Endothelial cell of umbilical vein (primary cell): ENCODE measurements at regions of chr10 and their contacts with region 1.

Region 1: DNA sequence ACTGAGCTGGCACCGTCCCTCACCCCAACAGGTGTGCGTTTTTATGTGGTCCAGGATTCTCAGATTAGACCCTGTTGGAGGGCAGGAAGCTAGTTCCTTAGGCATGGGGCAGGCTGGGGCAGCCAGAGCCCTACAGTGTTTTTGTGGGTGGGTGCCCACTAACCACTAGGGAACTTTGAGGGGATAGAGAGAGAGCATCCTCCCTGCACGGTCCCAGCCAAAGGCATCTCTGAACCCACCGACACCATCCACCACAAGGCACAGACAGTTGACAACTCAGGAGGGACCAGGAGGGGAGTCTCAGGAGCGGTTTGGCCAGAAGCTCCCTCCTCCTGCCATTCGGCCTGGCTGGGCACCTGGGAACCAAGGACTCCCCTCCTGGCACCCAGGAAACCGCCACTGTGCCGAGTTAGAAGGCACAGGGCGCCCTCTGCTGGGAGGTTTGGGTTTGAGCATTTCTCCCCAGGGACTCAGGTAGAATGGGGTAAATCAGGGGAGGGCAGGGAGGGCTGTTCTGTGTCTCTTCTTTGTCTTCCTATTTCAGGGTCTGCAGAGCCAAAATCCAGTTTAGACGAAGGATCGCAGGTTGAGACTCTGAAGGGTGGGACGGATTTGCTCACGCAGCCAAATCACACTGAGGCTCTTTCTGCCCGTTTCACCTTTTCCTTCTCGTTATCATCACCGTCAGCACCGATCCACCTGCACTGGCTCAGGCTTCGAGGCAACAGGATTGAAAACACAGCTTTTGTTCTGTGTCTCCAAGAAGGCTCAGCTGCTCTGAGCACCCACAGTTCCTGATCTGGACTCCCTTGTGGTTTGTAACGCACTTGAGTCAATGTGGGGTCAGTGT is 84.8 kb upstream of the COL13A1 start:
- DNase-seq: no peak
- H3K4me3 ChIP-seq: no peak overlapping the region
- H3K27ac ChIP-seq: no peak overlapping the region
- H3K4me1 ChIP-seq: peaks cover 6% of the 10 kb centered on the region
- H3K27me3 ChIP-seq: peaks cover 0 to 2% of the 10 kb centered on the region in 2 experiments
- CTCF ChIP-seq: peak; percentile 65 to 80
- POLR2A ChIP-seq: no peak

Region 2: GRCh38 chr10:69541463-69541862 is 175.5 kb before region 1 on chr10:
- CTCF ChIA-PET with region 1: no interaction called
- POLR2A ChIA-PET with region 1: no interaction called
- dilution Hi-C with region 1: no loop called
- intact Hi-C with region 1: no loop called
- DNase-seq: no peak
- H3K4me3 ChIP-seq: no peak overlapping the region
- H3K27ac ChIP-seq: no peak overlapping the region
- H3K4me1 ChIP-seq: no peaks in the 10 kb centered on the region
- H3K27me3 ChIP-seq: peaks cover 0 to 2% of the 10 kb centered on the region in 2 experiments
- CTCF ChIP-seq: no peak
- POLR2A ChIP-seq: no peak

Region 3: GRCh38 chr10:69639291-69640195 is 77.4 kb before region 1 on chr10:
- CTCF ChIA-PET with region 1: interaction called, 39 read pairs
- POLR2A ChIA-PET with region 1: no interaction called
- dilution Hi-C with region 1: no loop called
- intact Hi-C with region 1: loop called (anchors 1 kb)
- DNase-seq: peak; percentile 58
- H3K4me3 ChIP-seq: no peak overlapping the region
- H3K27ac ChIP-seq: no peak overlapping the region
- H3K4me1 ChIP-seq: no peaks in the 10 kb centered on the region
- H3K27me3 ChIP-seq: peaks cover 3 to 9% of the 10 kb centered on the region in 2 experiments
- CTCF ChIP-seq: peak; percentile 78 to 82
- POLR2A ChIP-seq: no peak

Region 4: DNA sequence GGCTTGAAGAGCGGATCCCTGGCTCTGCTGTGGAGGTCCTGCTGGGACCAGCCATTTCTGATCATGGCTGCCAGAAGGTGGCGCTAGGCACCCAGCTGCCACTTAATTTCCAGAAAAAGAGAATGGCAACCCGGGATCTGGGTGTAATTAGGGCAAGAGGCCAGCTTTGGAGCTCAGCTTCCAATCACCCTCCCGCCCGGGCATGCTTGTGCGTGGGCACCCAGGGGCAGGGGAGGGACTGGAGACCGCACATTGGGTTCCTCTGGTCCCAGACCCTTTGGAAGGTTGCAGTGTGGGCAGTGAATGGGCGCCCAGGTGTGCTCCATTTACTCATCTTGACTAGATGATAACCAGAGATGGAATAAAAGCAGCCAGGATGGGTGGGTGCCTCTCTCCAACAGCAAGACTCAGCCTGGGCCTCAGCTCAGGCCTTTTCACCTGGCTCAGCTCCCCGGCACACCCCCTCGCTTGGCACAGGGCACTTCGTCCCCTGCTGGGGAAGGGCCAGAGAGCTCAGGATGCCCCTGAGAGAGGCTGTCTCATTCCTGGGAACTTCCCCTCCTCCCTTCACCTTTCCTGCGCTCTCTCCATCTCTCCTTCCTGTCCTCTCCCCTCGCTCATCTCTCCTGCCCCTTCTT is 72.2 kb before region 1 on chr10:
- CTCF ChIA-PET with region 1: interaction called, 39 read pairs
- POLR2A ChIA-PET with region 1: no interaction called
- dilution Hi-C with region 1: no loop called
- intact Hi-C with region 1: loop called (anchors 1 kb)
- DNase-seq: peak; percentile 49
- H3K4me3 ChIP-seq: no peak overlapping the region
- H3K27ac ChIP-seq: no peak overlapping the region
- H3K4me1 ChIP-seq: no peaks in the 10 kb centered on the region
- H3K27me3 ChIP-seq: peaks cover 2 to 3% of the 10 kb centered on the region in 2 experiments
- CTCF ChIP-seq: peak; percentile 84 to 86
- POLR2A ChIP-seq: no peak

Region 5: GRCh38 chr10:69696073-69696731 is 20.7 kb before region 1 on chr10:
- CTCF ChIA-PET with region 1: interaction called, 13 read pairs
- POLR2A ChIA-PET with region 1: no interaction called
- dilution Hi-C with region 1: no loop called
- intact Hi-C with region 1: loop called (anchors 2 kb)
- DNase-seq: peak; percentile 70
- H3K4me3 ChIP-seq: no peak overlapping the region
- H3K27ac ChIP-seq: no peak overlapping the region
- H3K4me1 ChIP-seq: peaks cover 2% of the 10 kb centered on the region
- H3K27me3 ChIP-seq: peaks cover 9 to 15% of the 10 kb centered on the region in 2 experiments
- CTCF ChIP-seq: peak; percentile 56 to 60
- POLR2A ChIP-seq: no peak

Region 6: DNA sequence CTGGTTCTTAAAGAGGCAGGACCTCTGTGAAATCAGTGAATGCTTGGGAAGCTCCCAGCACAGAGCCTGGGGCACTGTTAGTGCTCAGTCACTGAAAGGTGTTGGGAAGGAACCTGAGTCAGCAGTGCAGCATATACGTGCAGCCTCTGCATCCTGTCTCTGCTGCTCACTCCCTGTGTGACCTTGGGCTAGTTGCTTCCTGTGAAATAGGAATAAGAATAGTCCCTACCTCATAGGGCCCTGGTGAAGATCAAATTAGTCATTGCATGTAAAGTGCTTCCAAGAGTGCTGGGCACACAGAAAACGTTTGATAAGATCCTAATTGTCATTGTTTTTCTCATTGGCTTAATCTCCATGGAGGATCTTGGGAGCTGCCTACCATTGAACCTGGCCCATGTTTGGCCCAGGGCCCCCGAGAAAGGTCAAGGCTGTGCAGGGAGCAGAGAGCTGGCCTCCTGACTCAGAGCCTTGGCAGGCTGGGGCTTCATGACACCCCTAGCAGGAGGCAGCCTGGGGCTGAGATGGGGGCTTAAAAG is 11.5 kb after region 1 on chr10:
- CTCF ChIA-PET with region 1: interaction called, 13 read pairs
- POLR2A ChIA-PET with region 1: no interaction called
- dilution Hi-C with region 1: no loop called
- intact Hi-C with region 1: no loop called
- DNase-seq: peak; percentile 87
- H3K4me3 ChIP-seq: no peak overlapping the region
- H3K27ac ChIP-seq: peak overlapping the region; percentile 64
- H3K4me1 ChIP-seq: peaks cover 21% of the 10 kb centered on the region
- H3K27me3 ChIP-seq: peaks cover 0 to 2% of the 10 kb centered on the region in 2 experiments
- CTCF ChIP-seq: no peak
- POLR2A ChIP-seq: no peak

Region 7: GRCh38 chr10:69974551-69975155 is 257.7 kb after region 1 on chr10:
- CTCF ChIA-PET with region 1: no interaction called
- POLR2A ChIA-PET with region 1: no interaction called
- dilution Hi-C with region 1: no loop called
- intact Hi-C with region 1: no loop called
- DNase-seq: no peak
- H3K4me3 ChIP-seq: no peak overlapping the region
- H3K27ac ChIP-seq: no peak overlapping the region
- H3K4me1 ChIP-seq: no peaks in the 10 kb centered on the region
- H3K27me3 ChIP-seq: peaks cover 40 to 74% of the 10 kb centered on the region in 2 experiments
- CTCF ChIP-seq: no peak
- POLR2A ChIP-seq: no peak